Pancreas (tissue), 10 donors: ENCODE measurements at regions of chr19 and their contacts with region 1.

Region 1: DNA sequence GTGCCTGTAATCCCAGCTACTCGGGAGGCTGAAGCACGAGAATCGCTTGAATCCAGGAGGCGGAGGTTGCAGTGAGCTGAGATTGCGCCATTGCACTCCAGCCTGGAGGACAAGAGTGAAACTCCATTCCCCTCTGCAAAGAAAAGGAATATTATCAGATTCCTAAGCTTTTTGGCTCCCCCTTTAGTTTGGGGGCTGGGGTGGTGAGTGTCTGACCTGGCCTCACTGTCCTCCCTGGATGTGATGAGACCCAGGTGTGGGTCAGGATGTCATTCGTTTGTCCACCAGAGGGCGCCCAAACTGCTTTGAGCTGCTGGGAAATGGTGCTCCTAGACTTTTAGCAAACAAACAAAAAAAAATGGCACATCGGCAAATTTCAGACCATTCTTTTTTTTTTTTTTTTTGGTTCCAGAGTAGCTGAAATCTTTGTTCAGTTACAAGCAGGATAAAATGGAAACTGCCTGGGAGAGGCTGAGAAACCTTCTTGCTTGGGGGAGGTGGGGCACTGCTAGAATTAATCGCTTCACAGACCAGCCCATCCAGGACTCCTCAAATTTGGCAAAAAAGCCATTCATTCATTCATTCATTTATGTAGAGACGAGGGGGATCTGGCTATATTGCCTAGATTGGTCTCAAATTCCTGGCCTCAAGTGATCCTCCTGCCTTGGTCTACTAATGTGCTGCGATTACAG is 29.4 kb downstream of the SPC24 start:
- DNase-seq: peak; percentile 63 to 89 (median 80)
- ATAC-seq: peak; percentile 57 to 83 (median 77)
- H3K4me3 ChIP-seq: no peak overlapping the region
- H3K27ac ChIP-seq: no peak overlapping the region
- H3K4me1 ChIP-seq: no peaks in the 10 kb centered on the region
- H3K27me3 ChIP-seq: no peaks in the 10 kb centered on the region
- CTCF ChIP-seq: peak; percentile 49 to 77 (median 74)

Region 2: GRCh38 chr19:10936661-10937084 is 189.5 kb before region 1 on chr19:
- intact Hi-C with region 1: loop called in 1 of 3 experiments (anchors 10 kb)
- DNase-seq: peak in 4 of 6 donors; percentile 38 to 60 (median 54)
- ATAC-seq: peak; percentile 47 to 80 (median 70)
- H3K4me3 ChIP-seq: no peak overlapping the region
- H3K27ac ChIP-seq: no peak overlapping the region
- H3K4me1 ChIP-seq: peaks cover 4 to 15% (median 10%) of the 10 kb centered on the region in 3 donors
- H3K27me3 ChIP-seq: no peaks in the 10 kb centered on the region
- CTCF ChIP-seq: peak; percentile 21 to 43 (median 34)

Region 3: GRCh38 chr19:11035441-11036377 is 90.4 kb before region 1 on chr19:
- intact Hi-C with region 1: loop called in 2 of 3 experiments (anchors 5 kb)
- DNase-seq: peak; percentile 84 to 95 (median 93)
- ATAC-seq: peak; percentile 97 to 98 (median 97)
- H3K4me3 ChIP-seq: no peak overlapping the region
- H3K27ac ChIP-seq: peak overlapping the region in 1 of 4 donors; percentile 22
- H3K4me1 ChIP-seq: peaks cover 0 to 2% (median 0%) of the 10 kb centered on the region in 3 donors
- H3K27me3 ChIP-seq: no peaks in the 10 kb centered on the region
- CTCF ChIP-seq: peak; percentile 77 to 84 (median 82)

Region 4: GRCh38 chr19:11209839-11210655 is 83.9 kb after region 1 on chr19:
- intact Hi-C with region 1: no loop called
- DNase-seq: no peak
- ATAC-seq: no peak
- H3K4me3 ChIP-seq: no peak overlapping the region
- H3K27ac ChIP-seq: no peak overlapping the region
- H3K4me1 ChIP-seq: no peaks in the 10 kb centered on the region
- H3K27me3 ChIP-seq: no peaks in the 10 kb centered on the region
- CTCF ChIP-seq: no peak